GM12878 (cell line): ENCODE measurements at regions of chr1 and their contacts with region 1.

Region 1: GRCh38 chr1:32107742-32108661 is at the start of gene KPNA6:
- DNase-seq: peak; percentile 90
- ATAC-seq: peak; percentile 83
- H3K4me3 ChIP-seq: peak within 1 kb of the TSS; percentile 87
- H3K27ac ChIP-seq: peak within 1 kb of the TSS; percentile 92
- H3K4me1 ChIP-seq: peaks cover 21% of the 10 kb centered on the region
- H3K27me3 ChIP-seq: no peaks in the 10 kb centered on the region
- CTCF ChIP-seq: no peak
- EP300 ChIP-seq: no peak
- POLR2A ChIP-seq: peak; percentile 79
- RAD21 ChIP-seq: no peak
- polyA plus RNA-seq, gene KPNA6: 11.1 to 25.5 TPM

Region 2: GRCh38 chr1:32013386-32014198 is 94.4 kb before region 1 on chr1 and contains the start of gene KHDRBS1:
- CTCF ChIA-PET with region 1: interaction called, 4 read pairs
- POLR2A ChIA-PET with region 1: interaction called, 13 read pairs
- RAD21 ChIA-PET with region 1: interaction called, 4 read pairs
- SMC1A ChIA-PET with region 1: interaction called, 4 read pairs
- in situ Hi-C with region 1: no loop called
- intact Hi-C with region 1: no loop called
- DNase-seq: peak; percentile 98
- ATAC-seq: peak; percentile 87
- H3K4me3 ChIP-seq: peak within 1 kb of the TSS; percentile 99
- H3K27ac ChIP-seq: peak within 1 kb of the TSS; percentile 94
- H3K4me1 ChIP-seq: 0 out of 2 replicates have a peak, but pooled peaks cover 4% of the 10 kb centered on the region
- H3K27me3 ChIP-seq: no peaks in the 10 kb centered on the region
- CTCF ChIP-seq: no peak
- EP300 ChIP-seq: 0 out of 4 replicates have a peak, but pooled peaks of 1 of the 2 experiments have one; percentile 29
- POLR2A ChIP-seq: peak; percentile 95
- RAD21 ChIP-seq: no peak
- polyA plus RNA-seq, gene KHDRBS1: 42.5 to 97.6 TPM

Region 3: GRCh38 chr1:32072622-32073298 is 35.2 kb before region 1 on chr1 and contains the start of gene TMEM39B:
- CTCF ChIA-PET with region 1: interaction called, 56 read pairs
- POLR2A ChIA-PET with region 1: interaction called, 58 read pairs
- RAD21 ChIA-PET with region 1: interaction called, 29 read pairs
- SMC1A ChIA-PET with region 1: interaction called, 12 read pairs
- in situ Hi-C with region 1: no loop called
- intact Hi-C with region 1: loop called (anchors 5 kb)
- DNase-seq: peak; percentile 72
- ATAC-seq: peak; percentile 92
- H3K4me3 ChIP-seq: peak within 1 kb of the TSS; percentile 92
- H3K27ac ChIP-seq: peak within 1 kb of the TSS; percentile 70
- H3K4me1 ChIP-seq: peaks cover 13% of the 10 kb centered on the region
- H3K27me3 ChIP-seq: no peaks in the 10 kb centered on the region
- CTCF ChIP-seq: no peak
- EP300 ChIP-seq: peak in 1 of 2 experiments; percentile 45; a peak in 2 of 4 replicates
- POLR2A ChIP-seq: peak; percentile 96
- RAD21 ChIP-seq: no peak
- polyA plus RNA-seq, gene TMEM39B: 2.3 to 3.4 TPM

Region 4: GRCh38 chr1:32122151-32122550 is 14.1 kb after region 1 on chr1:
- CTCF ChIA-PET with region 1: interaction called, 52 read pairs
- POLR2A ChIA-PET with region 1: interaction called, 7 read pairs
- RAD21 ChIA-PET with region 1: interaction called, 6 read pairs
- SMC1A ChIA-PET with region 1: interaction called, 11 read pairs
- in situ Hi-C with region 1: no loop called
- intact Hi-C with region 1: no loop called
- DNase-seq: no peak
- ATAC-seq: no peak
- H3K4me3 ChIP-seq: no peak overlapping the region
- H3K27ac ChIP-seq: no peak overlapping the region
- H3K4me1 ChIP-seq: peaks cover 10% of the 10 kb centered on the region
- H3K27me3 ChIP-seq: no peaks in the 10 kb centered on the region
- CTCF ChIP-seq: no peak
- EP300 ChIP-seq: no peak
- POLR2A ChIP-seq: no peak
- RAD21 ChIP-seq: no peak

Region 5: DNA sequence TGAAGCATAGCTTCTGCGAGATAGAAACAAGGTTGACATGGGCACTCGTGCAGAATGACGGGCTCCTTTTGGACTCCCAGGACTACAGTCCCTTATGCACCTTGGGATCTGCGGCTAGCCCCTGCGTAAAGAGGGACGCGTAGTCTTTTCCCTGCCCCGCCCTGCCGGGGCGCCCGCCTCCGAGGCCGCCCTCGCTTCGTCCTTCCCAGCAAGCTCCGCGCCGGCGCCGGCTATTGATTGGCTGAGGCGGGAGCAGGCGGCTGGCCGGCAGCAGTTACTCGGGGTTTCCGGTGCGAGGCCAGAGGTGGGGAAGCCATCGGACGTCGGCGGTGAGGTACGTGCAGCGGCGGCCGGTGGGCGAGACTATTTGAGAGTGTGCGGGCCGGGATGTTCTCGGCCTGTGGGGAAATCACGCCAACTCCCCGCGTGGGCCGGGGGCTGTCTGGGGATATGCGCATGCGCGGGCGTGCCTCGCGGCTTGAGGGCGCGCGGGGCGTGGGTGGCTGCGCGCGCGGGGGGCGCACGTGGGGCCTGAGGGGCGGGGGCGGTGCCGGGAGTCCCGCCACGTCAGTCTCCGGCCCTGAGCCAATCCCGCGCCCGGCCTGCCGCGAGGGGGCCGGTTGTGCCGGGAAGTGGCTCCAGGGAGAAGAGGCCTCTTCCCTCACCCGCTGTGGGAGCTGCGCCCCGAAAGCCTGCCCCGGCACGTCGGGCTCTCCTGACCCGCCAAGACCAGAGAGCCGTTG is 71.6 kb after region 1 on chr1 and contains the start of gene TXLNA:
- CTCF ChIA-PET with region 1: interaction called, 5 read pairs
- POLR2A ChIA-PET with region 1: interaction called, 8 read pairs
- RAD21 ChIA-PET with region 1: interaction called, 9 read pairs
- SMC1A ChIA-PET with region 1: interaction called, 11 read pairs
- in situ Hi-C with region 1: no loop called
- intact Hi-C with region 1: no loop called
- DNase-seq: peak; percentile 60
- ATAC-seq: peak; percentile 93
- H3K4me3 ChIP-seq: peak within 1 kb of the TSS; percentile 89
- H3K27ac ChIP-seq: peak within 1 kb of the TSS; percentile 85
- H3K4me1 ChIP-seq: peaks cover 17% of the 10 kb centered on the region
- H3K27me3 ChIP-seq: no peaks in the 10 kb centered on the region
- CTCF ChIP-seq: no peak
- EP300 ChIP-seq: peak in 1 of 2 experiments; percentile 33; a peak in 1 of 4 replicates
- POLR2A ChIP-seq: peak; percentile 99
- RAD21 ChIP-seq: no peak
- polyA plus RNA-seq, gene TXLNA: 7.2 to 10.3 TPM